Panc1 (cell line): ENCODE measurements at regions of chr13 and their contacts with region 1.

Region 1: GRCh38 chr13:61751039-61751438 is 335.4 kb upstream of the PCDH20 start:
- DNase-seq: no peak
- ATAC-seq: no peak
- H3K4me3 ChIP-seq: no peak overlapping the region
- H3K27ac ChIP-seq: no peak overlapping the region
- H3K4me1 ChIP-seq: no peaks in the 10 kb centered on the region
- H3K27me3 ChIP-seq: no peaks in the 10 kb centered on the region
- CTCF ChIP-seq: no peak

Region 2: GRCh38 chr13:61695147-61695546 is 55.9 kb before region 1 on chr13:
- CTCF ChIA-PET with region 1: no interaction called
- POLR2A ChIA-PET with region 1: no interaction called
- in situ Hi-C with region 1: no loop called
- intact Hi-C with region 1: no loop called
- DNase-seq: no peak
- ATAC-seq: no peak
- H3K4me3 ChIP-seq: no peak overlapping the region
- H3K27ac ChIP-seq: no peak overlapping the region
- H3K4me1 ChIP-seq: no peaks in the 10 kb centered on the region
- H3K27me3 ChIP-seq: no peaks in the 10 kb centered on the region
- CTCF ChIP-seq: no peak

Region 3: GRCh38 chr13:61795580-61795979 is 44.5 kb after region 1 on chr13:
- CTCF ChIA-PET with region 1: no interaction called
- POLR2A ChIA-PET with region 1: no interaction called
- in situ Hi-C with region 1: no loop called
- intact Hi-C with region 1: no loop called
- DNase-seq: no peak
- ATAC-seq: no peak
- H3K4me3 ChIP-seq: no peak overlapping the region
- H3K27ac ChIP-seq: no peak overlapping the region
- H3K4me1 ChIP-seq: no peaks in the 10 kb centered on the region
- H3K27me3 ChIP-seq: no peaks in the 10 kb centered on the region
- CTCF ChIP-seq: no peak

Region 4: GRCh38 chr13:61954092-61954491 is 203.1 kb after region 1 on chr13:
- CTCF ChIA-PET with region 1: no interaction called
- POLR2A ChIA-PET with region 1: no interaction called
- in situ Hi-C with region 1: no loop called
- intact Hi-C with region 1: loop called (anchors 10 kb)
- DNase-seq: peak; percentile 12
- ATAC-seq: no peak
- H3K4me3 ChIP-seq: no peak overlapping the region
- H3K27ac ChIP-seq: no peak overlapping the region
- H3K4me1 ChIP-seq: no peaks in the 10 kb centered on the region
- H3K27me3 ChIP-seq: no peaks in the 10 kb centered on the region
- CTCF ChIP-seq: peak; percentile 53; the same call in 1 of the 2 replicates